ENCODE measurements at regions of chr6 and their contacts with region 1.

Region 1: DNA sequence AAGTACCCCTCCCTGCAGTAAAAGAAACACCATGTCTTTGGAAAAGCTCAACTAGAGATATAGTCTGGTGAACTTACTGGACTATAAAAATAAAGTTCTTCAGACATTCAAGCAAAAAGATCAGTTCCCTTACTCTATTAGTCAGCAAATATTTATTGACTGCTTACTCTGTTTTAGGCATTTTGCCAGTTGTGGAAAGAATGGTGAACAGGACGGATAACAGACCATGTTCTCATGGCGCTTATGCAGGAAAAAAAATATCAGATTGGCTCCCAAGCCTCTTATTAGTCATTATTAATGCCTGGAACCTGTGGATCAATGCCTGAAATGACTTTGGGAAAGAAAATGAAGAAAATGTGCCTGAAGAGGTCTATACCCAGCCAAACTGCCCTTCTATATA is 282.2 kb upstream of the EPHA7 start:
- DNase-seq: no peak
- H3K4me3 ChIP-seq: no peak overlapping the region
- H3K27ac ChIP-seq: no peak overlapping the region
- H3K4me1 ChIP-seq: no peaks in the 10 kb centered on the region
- CTCF ChIP-seq: no peak

Region 2: GRCh38 chr6:93721385-93722048 is 20.0 kb after region 1 on chr6:
- CTCF ChIA-PET with region 1: no interaction called
- POLR2A ChIA-PET with region 1: no interaction called
- intact Hi-C with region 1: loop called (anchors 2 kb)
- DNase-seq: peak; percentile 0
- H3K4me3 ChIP-seq: no peak overlapping the region
- H3K27ac ChIP-seq: no peak overlapping the region
- H3K4me1 ChIP-seq: no peaks in the 10 kb centered on the region
- CTCF ChIP-seq: 0 out of 2 replicates have a peak, but pooled peaks have one; percentile 29